ENCODE measurements at regions of chr4 and their contacts with region 1.

Region 1: DNA sequence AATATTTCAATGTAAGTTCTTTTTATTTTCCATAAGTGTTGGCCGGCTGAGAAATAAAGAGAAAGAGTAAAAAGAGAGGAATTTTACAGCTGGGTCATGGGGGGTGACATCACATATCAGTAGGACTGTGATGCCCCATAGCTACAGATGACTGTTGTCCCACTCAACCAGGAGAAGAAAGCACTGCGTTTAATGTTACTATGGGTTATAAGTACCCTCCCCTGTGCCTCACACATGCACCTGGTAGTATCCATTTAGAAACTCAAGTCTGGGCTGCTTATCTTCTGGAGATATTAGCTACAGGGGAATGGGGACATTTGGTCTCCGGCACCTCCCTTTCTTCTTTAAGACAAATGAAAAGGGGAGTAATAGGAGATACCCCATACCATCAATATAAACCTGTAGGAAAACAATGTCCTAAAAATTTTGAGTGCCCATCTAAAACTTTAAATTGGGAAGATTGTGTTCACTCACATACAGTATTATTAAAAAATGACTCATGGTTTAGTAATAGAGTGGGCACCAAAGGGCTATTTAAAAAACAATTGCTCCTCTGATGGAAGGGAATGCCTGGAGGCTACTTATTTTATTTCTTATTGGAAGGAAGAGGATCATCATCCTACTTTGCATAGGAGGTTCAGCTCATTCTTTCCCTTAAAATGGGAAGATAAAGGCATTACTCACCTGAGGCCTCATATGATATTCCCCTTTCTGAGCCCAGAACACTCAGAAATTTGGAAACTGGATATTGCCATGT is 18.2 kb downstream of the UGT2B11 start:
- DNase-seq: peak; percentile 94
- ATAC-seq: peak; percentile 78
- H3K4me3 ChIP-seq: no peak overlapping the region
- H3K27ac ChIP-seq: peak overlapping the region; percentile 88
- H3K4me1 ChIP-seq: peaks cover 22% of the 10 kb centered on the region
- H3K27me3 ChIP-seq: no peaks in the 10 kb centered on the region
- CTCF ChIP-seq: no peak

Region 2: DNA sequence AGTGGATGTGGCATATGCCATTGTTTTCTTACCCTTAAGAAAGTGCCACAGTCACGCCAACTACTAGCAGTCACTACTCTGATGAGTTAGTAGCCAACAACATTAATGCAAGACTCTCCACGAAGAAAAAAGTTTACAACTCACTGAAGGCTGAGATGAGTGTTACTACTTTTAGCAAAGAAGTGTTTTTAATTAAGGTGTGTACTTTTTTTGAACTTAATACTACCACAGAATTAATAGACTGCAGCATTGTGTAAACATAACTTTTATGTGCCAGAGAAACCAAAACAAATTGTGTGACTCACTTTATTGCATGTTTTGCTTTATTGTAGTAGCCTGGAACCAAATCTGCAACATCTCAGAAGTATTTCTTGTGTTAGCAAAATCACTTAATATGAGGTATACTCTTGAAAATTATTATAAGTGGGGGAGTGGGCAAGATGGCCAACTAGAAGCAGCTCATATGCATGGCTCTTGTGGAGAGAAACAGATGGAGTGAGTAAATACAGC is 301.6 kb after region 1 on chr4:
- CTCF ChIA-PET with region 1: no interaction called
- POLR2A ChIA-PET with region 1: no interaction called
- intact Hi-C with region 1: loop called (anchors 1 kb)
- DNase-seq: peak; percentile 71
- ATAC-seq: peak; percentile 76
- H3K4me3 ChIP-seq: 0 out of 2 replicates have a peak overlapping the region, but pooled peaks have one; percentile 8
- H3K27ac ChIP-seq: peak overlapping the region; percentile 50
- H3K4me1 ChIP-seq: peaks cover 29% of the 10 kb centered on the region
- H3K27me3 ChIP-seq: no peaks in the 10 kb centered on the region
- CTCF ChIP-seq: no peak

Measured in PC-3 (cell line).